ENCODE measurements at regions of chr16 and their contacts with region 1.

Region 1: GRCh38 chr16:78770353-78771091 is 671.1 kb downstream of the WWOX start:
- DNase-seq: peak; percentile 83
- H3K4me3 ChIP-seq: no peak overlapping the region
- H3K27ac ChIP-seq: no peak overlapping the region
- H3K4me1 ChIP-seq: no peaks in the 10 kb centered on the region
- H3K27me3 ChIP-seq: no peaks in the 10 kb centered on the region
- CTCF ChIP-seq: peak; percentile 92

Region 2: DNA sequence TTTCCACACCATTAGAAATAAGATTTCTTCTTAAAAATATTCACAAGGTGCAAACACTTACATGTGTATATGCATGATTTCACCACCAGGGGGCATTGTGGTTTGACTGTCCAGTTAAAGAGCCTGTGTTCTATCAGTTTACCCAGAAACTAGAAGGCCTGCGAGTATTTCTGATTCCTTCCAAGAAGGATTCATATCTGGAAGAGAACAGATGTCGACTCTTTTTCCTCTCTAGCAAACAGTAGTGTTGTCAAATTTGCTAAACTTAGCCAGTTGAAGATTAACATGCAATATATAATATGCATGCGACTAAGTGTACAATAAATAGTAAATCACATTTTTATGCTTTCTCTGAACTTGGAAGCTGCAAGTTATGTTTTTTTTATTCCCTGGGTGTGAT is 266.9 kb before region 1 on chr16:
- intact Hi-C with region 1: loop called (anchors 10 kb)
- DNase-seq: peak; percentile 69
- H3K4me3 ChIP-seq: no peak overlapping the region
- H3K27ac ChIP-seq: no peak overlapping the region
- H3K4me1 ChIP-seq: no peaks in the 10 kb centered on the region
- H3K27me3 ChIP-seq: no peaks in the 10 kb centered on the region
- CTCF ChIP-seq: peak; percentile 82

Region 3: DNA sequence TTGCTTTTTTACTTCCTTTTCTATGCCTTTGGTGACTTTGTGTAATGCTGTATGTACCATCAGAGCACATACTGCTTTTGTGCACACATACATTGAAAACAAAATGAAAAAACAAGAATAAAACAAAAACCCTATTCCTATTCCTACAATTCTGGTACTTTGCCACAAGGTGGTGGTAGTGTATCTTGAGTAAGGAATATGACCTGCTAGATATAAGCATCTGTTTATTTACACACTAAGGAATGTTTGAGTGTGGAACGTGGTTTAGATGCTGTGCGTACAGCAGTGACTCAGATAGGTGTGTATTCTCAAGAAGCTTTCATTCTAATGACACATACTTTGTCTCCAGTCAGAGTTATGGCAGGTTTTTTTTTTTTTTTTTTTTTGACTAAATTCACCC is 64.8 kb before region 1 on chr16:
- intact Hi-C with region 1: loop called (anchors 5 kb)
- DNase-seq: no peak
- H3K4me3 ChIP-seq: no peak overlapping the region
- H3K27ac ChIP-seq: no peak overlapping the region
- H3K4me1 ChIP-seq: no peaks in the 10 kb centered on the region
- H3K27me3 ChIP-seq: no peaks in the 10 kb centered on the region
- CTCF ChIP-seq: peak; percentile 54

Measured in colonic mucosa (tissue), 4 donors.